GM10248 (cell line): ENCODE measurements at regions of chr9 and their contacts with region 1.

Region 1: DNA sequence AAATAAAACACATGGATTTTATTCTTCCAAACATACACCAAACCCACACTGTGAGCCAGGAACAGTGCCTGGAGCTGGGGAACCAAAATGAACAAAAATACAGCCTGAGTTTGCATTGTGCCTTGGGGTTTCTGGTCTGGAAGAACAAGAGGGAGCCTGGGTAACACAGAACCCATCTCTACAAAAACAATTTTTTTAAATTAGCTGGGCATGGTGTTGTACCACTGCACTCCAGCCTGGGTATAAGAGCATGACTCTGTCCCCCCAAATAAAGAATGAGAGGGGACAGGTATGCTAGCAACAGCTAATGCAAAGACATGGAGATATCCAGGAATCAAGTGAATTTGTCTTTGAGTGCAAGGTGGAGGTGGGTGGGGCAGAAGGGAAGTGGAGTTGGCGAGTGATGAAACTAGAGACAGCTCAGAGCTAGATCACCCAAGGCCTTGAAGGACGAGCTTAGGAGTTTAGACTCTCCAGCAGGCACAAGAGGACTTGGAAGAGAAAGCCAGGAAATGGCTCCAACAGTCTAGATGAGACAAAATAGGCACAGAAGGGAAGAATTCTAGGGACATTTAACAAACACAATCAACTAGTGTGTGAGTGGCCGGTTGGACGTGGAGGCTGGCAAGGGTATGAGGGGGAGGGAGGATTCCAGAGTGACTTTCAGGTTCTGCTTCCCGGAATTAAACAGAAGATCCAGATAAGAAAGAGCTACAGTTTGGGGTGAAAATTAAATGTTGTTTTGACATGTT is 47.4 kb downstream of the FNBP1 start:
- DNase-seq: no peak
- CTCF ChIP-seq: no peak

Region 2: DNA sequence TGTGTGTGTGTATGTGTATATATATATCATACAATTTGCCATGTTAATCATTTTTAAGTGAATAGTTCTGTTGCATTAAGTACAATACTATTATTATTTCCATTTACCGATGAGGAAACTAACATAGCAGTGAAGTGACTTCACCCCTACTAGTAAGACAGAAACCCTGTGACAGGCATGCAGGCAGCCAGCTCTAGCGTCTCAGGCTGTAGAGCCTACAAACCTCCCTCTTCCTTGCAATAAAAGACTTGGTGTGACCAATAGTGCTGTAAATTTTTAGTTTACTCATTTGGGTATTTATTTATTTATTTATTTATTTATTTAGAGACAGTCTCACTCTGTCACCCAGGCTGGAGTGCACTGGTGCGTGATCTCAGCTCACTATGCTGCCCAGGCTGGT is 22.7 kb after region 1 on chr9:
- CTCF ChIA-PET with region 1: interaction called, 22 read pairs
- POLR2A ChIA-PET with region 1: interaction called, 11 read pairs
- DNase-seq: no peak
- CTCF ChIP-seq: no peak

Region 3: DNA sequence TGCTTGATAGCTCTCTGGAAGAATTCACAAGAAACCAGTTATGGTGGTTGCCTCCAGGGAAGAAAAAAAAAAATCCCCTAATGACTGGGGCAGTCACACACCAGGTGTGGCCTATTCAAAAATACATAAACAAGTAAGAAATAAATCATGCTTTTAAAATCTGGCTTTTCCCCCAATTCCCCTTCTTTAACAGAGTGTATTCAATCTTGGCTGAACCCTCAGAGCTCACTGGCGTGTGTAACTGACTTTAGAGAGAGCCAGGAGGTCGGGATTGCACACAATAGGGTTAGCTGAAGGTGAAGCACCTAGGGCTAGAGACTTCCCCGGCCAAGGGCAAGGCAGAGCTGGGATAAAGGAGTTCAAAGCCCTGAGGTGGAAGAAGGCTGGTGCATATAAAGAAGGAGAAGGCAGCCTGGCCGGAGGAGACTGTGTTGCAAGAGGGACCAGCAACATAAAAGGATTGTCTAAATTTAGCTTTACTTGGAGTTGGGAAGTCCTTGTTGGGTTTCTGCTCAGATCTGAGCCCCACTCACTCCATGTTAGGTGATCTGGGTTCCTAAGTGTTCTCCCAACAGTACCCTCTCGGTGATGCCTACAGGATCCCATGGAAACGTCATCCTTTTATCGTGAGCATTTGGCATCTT is 27.7 kb after region 1 on chr9:
- CTCF ChIA-PET with region 1: interaction called, 22 read pairs
- POLR2A ChIA-PET with region 1: interaction called, 10 read pairs
- DNase-seq: no peak
- CTCF ChIP-seq: no peak

Region 4: GRCh38 chr9:130058154-130058553 is 62.6 kb after region 1 on chr9:
- CTCF ChIA-PET with region 1: no interaction called
- POLR2A ChIA-PET with region 1: no interaction called
- DNase-seq: no peak
- CTCF ChIP-seq: no peak